HEK293T (cell line): ENCODE measurements at regions of chr1 and their contacts with region 1.

Region 1: GRCh38 chr1:45303582-45304310 is 22.9 kb upstream of the HPDL start:
- DNase-seq: peak; percentile 97

Region 2: GRCh38 chr1:45018599-45019230 is 285.0 kb before region 1 on chr1:
- CTCF ChIA-PET with region 1: interaction called, 139 read pairs
- POLR2A ChIA-PET with region 1: interaction called, 154 read pairs
- DNase-seq: peak; percentile 62

Region 3: DNA sequence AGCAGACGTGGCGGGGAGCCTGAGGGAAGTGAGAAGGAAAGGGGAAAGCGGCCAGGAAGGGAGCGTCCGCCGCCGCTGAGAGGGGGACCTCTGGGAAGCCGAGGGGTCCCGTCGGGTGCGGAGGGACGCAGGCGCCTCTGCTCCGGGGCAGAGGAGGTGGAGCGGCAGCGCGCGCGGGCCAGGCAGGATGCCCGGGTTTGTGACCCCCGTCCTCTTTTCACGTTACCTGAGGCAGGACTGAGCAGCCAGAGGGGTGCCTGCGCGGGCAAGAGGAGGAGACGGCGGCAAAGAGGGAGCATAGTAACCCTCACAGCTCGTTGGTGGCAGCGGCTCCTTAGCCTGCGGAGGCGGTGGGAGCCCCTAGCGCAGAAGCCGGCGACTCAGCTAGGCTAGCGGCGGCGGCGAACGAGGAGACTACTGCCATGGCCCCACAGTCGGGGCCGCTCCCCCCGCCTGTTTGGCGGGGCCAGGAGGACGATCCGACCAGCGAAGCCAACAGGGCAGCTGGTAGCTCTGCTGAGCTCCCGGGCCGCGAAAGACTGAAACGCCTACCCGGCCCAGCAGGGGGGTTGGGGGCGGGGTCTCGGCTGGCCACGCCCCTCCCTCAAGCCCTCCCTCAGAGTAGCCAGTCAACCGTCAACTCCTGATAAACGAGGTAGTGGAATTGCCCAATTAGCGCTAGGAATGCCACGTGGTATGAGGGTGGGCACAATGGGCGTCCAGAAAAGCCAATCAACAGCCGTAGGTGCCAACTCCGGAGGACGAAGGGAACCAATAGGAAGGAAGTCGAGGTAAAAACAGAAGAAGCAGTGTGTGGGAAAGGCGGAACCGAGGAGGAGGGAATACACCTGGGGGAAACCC is 187.1 kb after region 1 on chr1 and contains the start of gene TESK2:
- CTCF ChIA-PET with region 1: interaction called, 5 read pairs
- POLR2A ChIA-PET with region 1: interaction called, 17 read pairs
- DNase-seq: peak; percentile 94